MCF 10A (cell line): ENCODE measurements at regions of chr3 and their contacts with region 1.

Region 1: DNA sequence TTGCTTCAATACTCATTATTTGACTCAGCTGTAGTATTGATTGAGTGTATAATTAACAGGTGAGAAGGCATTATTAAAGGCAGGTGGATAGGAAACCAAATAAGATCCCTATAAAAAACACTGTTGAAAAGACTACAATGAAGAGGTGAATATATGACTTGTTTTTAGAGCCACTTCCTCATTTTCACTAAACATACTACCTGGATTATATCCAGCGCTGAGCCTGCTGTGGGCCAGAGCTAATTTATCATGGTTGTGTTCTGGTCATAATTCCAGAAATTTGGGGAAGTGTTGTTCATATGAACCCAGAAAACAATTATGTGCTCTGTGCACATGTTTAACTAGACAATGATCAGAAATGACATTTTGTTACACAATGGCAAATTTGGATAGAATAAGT is 235.3 kb upstream of the MME start:
- DNase-seq: no peak
- H3K4me3 Mint-ChIP-seq: no peak overlapping the region
- H3K27ac Mint-ChIP-seq: no peak overlapping the region
- H3K4me1 Mint-ChIP-seq: no peaks in the 10 kb centered on the region
- H3K27me3 Mint-ChIP-seq: no peaks in the 10 kb centered on the region
- CTCF ChIP-seq: no peak

Region 2: GRCh38 chr3:154285221-154285620 is 559.6 kb before region 1 on chr3:
- CTCF ChIA-PET with region 1: interaction called, 10 read pairs
- POLR2A ChIA-PET with region 1: no interaction called
- intact Hi-C with region 1: no loop called
- DNase-seq: no peak
- H3K4me3 Mint-ChIP-seq: no peak overlapping the region
- H3K27ac Mint-ChIP-seq: no peak overlapping the region
- H3K4me1 Mint-ChIP-seq: no peaks in the 10 kb centered on the region
- H3K27me3 Mint-ChIP-seq: no peaks in the 10 kb centered on the region
- CTCF ChIP-seq: no peak